Sciatic nerve (tissue), 2 donors: ENCODE measurements at regions of chr9 and their contacts with region 1.

Region 1: DNA sequence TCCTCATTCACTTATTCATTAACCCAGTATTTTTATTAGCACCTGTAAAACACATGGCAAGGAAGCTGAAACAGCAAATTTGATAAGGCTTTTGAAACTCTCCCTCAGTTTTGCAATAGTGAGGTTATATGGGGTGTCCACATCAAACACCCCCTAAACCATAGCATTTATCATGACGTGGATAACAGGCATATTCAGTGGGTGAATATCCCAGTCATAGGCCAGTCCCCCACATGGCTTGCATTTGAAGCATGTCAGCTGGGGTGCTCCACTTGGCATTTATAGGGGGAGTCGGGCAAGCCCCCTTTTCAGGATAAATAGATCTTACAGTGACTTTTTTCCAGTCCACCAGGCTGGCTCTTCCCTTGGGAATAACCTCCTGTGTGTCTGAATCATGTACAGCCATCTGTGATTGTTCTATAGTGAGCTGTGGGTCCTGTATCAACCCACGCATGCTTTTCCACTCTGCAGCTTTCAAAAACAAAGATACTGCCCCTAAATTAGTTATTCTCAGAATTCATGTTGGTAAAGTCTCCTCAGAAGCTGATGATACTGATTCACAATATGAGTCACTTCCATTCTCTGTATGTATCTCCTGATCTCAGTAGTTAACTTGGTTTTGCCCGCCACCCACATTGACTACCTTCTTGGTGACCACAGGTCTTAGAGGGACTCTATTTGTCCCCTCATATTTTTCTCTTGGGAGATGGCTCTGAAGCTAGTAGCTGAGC is 84.4 kb upstream of the SPIN1 start:
- DNase-seq: no peak
- ATAC-seq: no peak

Region 2: GRCh38 chr9:88339317-88339716 is 35.4 kb after region 1 on chr9:
- intact Hi-C with region 1: loop called (anchors 1 kb)
- DNase-seq: no peak
- ATAC-seq: no peak

Region 3: GRCh38 chr9:88378317-88378716 is 74.4 kb after region 1 on chr9:
- intact Hi-C with region 1: no loop called
- DNase-seq: no peak
- ATAC-seq: no peak

Region 4: DNA sequence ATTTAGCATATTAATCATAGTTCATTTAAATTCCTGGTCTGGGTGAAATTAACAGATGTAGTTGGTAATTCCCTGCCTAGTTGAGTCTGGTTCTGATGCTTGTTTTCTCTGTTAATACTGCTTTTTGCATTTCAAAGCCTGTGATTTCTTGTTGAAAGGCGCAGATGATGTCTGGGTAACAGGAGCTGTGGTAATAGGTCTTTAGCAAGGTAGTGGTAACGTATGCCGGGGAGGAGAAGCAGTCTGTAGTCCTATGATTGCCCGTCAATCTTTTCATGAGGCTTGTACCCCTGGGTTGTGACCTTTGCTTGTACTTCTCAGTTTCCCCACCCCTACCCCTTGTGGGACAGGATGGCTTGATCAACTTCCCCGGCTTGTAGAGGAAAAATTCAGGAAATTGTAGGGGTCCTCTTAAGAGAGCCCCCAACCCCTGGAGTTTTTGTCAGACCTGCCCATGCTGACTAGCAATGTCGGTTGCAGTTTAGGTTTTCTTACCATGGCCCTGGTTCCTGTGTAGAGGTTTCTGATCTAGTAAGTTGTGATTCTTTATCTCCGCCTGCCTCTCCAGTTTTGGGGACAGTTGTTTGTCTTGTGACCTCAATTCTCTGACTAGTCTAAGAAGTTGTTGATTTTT is 139.7 kb after region 1 on chr9:
- intact Hi-C with region 1: no loop called
- DNase-seq: no peak
- ATAC-seq: no peak